ENCODE measurements at regions of chr9 and their contacts with region 1.

Region 1: GRCh38 chr9:93064392-93065134 is 6.1 kb downstream of the SUSD3 start:
- DNase-seq: no peak
- H3K4me3 ChIP-seq: no peak overlapping the region
- H3K27ac ChIP-seq: peak overlapping the region in 1 of 2 donors; percentile 50
- H3K4me1 ChIP-seq: peaks cover 49% of the 10 kb centered on the region
- H3K27me3 ChIP-seq: no peaks in the 10 kb centered on the region
- CTCF ChIP-seq: no peak
- POLR2A ChIP-seq: no peak

Region 2: GRCh38 chr9:93003552-93004407 is 60.8 kb before region 1 on chr9:
- intact Hi-C with region 1: loop called (anchors 10 kb)
- DNase-seq: peak; percentile 86
- H3K4me3 ChIP-seq: peak overlapping the region; percentile 42 to 48
- H3K27ac ChIP-seq: peak overlapping the region; percentile 5 to 45
- H3K4me1 ChIP-seq: peaks cover 25% of the 10 kb centered on the region
- H3K27me3 ChIP-seq: no peaks in the 10 kb centered on the region
- CTCF ChIP-seq: peak; percentile 70 to 80 (median 71)
- POLR2A ChIP-seq: no peak